ENCODE measurements at regions of chr9 and their contacts with region 1.

Region 1: GRCh38 chr9:13088720-13089427 is 190.6 kb downstream of the MPDZ start:
- DNase-seq: no peak
- ATAC-seq: peak; percentile 68

Region 2: DNA sequence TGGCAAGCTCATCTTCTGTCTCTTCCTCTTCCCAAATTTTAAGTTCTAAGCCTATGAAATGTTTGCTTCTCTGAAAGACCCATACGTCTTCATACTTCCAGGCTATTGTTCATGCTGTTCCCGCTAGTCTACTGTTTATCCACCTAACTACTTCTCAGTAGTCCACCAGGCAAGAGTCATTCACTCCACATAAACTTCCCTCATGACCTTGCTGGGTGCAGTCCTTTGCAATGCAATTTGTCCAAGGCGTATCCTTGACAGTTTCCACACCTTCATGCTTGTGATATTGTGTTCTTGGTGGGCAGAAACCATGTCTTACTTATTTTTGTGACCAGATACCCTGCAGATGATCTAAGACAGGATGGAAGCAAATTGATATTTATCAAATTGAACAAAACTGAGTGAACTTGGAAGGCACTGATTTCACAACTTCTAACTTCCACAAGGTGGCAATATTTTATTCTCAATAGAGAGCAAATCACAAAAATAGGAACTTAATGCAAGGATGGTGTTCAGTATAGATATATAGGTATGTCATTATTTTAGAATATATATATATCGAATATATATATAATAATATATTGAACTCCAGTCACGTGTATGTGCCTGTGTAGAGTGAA is 365.4 kb before region 1 on chr9:
- intact Hi-C with region 1: loop called (anchors 10 kb)
- DNase-seq: no peak
- ATAC-seq: no peak

Region 3: GRCh38 chr9:12859704-12860251 is 229.1 kb before region 1 on chr9:
- intact Hi-C with region 1: no loop called
- DNase-seq: no peak
- ATAC-seq: no peak

Region 4: GRCh38 chr9:13140843-13141592 is 52.1 kb after region 1 on chr9:
- intact Hi-C with region 1: no loop called
- DNase-seq: no peak
- ATAC-seq: peak; percentile 61

Measured in sciatic nerve (tissue), 2 donors.